Colonic mucosa (tissue), 4 donors: ENCODE measurements at regions of chr11 and their contacts with region 1.

Region 1: DNA sequence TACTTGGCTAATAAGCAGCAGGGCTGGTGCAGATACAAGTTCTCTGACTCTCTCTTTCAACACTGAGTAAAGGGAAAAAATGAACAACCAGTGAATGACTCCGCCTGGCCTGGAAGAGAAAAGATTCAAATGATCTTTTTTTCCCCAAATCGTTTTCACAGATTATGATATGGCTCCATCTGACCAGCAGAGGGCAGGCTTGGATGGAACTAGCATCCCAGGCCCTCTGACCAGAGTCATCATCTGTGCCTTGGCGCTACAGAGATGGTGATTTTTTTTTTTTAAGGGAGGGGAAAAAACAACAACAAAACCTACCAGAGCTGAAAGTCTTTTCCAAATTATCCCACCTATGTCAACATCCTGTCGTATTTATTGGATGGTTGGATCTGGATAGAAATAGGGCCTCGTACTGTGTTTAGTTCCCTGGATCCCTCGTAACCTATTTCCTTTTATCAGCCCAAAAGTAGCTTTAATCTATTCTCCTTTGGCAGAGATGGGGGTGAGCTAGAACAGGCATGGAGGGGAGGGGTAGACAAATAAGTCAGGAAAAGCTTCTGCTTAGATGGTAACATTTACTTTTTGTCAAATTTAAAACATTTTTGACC is 69.7 kb downstream of the PRSS23 start:
- DNase-seq: peak; percentile 60
- H3K4me3 ChIP-seq: no peak overlapping the region
- H3K27ac ChIP-seq: no peak overlapping the region
- H3K4me1 ChIP-seq: no peaks in the 10 kb centered on the region
- H3K27me3 ChIP-seq: no peaks in the 10 kb centered on the region
- CTCF ChIP-seq: peak; percentile 63

Region 2: DNA sequence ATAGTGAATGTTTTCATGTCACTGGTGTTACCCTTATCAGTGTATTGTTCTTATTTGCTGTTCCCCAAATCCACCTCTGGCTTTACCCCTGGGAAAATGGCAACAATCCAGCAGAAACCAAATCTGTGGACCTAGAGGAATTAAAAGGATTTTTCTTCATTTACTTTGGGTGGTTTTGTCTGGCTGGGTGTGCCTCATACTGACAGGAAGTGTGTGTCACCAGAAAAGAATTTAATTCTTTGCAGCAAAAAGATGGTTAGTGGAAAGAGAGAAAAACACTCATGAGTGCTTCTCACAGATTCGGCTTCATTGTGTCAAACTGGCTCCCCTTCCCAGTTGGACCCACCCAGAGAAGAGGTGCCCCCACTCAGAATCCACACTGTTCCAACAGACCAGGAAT is 46.3 kb after region 1 on chr11:
- intact Hi-C with region 1: loop called (anchors 2 kb)
- DNase-seq: no peak
- H3K4me3 ChIP-seq: no peak overlapping the region
- H3K27ac ChIP-seq: no peak overlapping the region
- H3K4me1 ChIP-seq: no peaks in the 10 kb centered on the region
- H3K27me3 ChIP-seq: no peaks in the 10 kb centered on the region
- CTCF ChIP-seq: no peak

Region 3: DNA sequence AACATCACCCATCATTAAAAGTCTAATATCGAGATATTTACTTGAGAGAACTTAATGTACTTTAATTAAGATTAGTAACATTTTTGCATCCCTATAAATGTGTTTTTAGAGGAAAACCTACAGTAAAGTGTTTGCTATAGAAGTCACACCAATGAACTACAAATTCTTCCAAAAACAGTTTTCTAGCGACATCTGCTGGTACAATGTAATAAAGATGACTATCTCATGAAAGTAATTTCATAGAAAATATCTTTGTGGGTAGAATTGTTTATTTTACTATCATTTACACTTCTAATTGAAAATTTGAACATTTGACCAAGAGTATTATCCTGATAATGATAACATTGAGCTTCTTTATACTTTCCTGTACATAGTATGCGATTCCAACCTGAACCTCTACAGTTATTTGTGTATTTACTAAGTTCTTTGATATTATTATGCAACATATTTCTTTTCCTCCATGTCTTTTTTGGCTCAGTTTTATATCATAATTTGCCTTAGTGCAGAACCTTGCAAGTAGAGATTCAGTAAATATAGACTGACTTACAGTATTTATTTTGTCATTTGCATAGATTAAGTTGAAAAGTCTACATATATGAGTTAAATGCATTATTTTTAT is 420.3 kb after region 1 on chr11:
- intact Hi-C with region 1: loop called (anchors 10 kb)
- DNase-seq: no peak
- H3K4me3 ChIP-seq: no peak overlapping the region
- H3K27ac ChIP-seq: no peak overlapping the region
- H3K4me1 ChIP-seq: no peaks in the 10 kb centered on the region
- H3K27me3 ChIP-seq: no peaks in the 10 kb centered on the region
- CTCF ChIP-seq: peak; percentile 65